Posterior cingulate gyrus (tissue), 11 donors: ENCODE measurements at regions of chr12 and their contacts with region 1.

Region 1: GRCh38 chr12:113152835-113153814 is 3.6 kb downstream of the CFAP73 start:
- DNase-seq: peak; percentile 60 to 97 (median 78)

Region 2: DNA sequence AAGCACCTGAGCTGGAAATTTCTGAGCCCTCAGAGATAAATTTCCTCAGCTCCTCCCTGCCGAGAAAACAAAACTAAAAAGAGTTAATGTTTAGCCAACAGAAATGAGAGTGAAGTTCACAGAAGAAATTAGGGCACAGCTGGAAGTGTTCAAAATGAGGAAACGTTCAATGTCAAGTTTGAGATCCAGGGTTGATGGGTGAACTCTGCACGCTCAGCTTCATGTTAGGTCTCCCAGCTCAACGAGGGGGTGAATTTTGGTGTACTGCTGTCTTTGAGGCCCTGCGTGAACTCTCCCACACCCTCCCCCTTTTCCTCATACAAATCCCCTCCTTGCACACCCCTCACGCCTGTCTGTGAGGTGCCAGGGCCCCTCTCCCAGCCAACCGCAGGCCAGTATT is 228.1 kb before region 1 on chr12:
- intact Hi-C with region 1: no loop called
- DNase-seq: no peak

Region 3: GRCh38 chr12:113098446-113098896 is 54.7 kb before region 1 on chr12:
- intact Hi-C with region 1: loop called (anchors 10 kb)
- DNase-seq: peak; percentile 79 to 97 (median 86)

Region 4: DNA sequence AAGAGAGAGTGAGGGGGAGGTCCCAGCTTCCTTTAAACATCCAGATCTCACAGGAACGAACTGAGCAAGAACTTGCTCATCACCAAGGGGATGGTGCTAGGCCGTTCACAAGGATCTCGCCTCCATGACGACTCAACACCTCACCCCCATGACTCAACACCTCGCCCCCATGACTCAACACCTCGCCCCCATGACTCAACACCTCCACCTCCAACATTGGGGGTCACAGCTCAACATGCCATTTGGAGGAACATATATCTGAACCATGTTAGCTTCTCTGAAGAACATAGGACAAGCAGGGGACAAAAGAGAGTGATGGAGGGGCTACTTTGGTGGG is 384.6 kb after region 1 on chr12:
- intact Hi-C with region 1: no loop called
- DNase-seq: peak in 1 of 10 donors; percentile 26